K562 (cell line): ENCODE measurements at regions of chr6 and their contacts with region 1.

Region 1: DNA sequence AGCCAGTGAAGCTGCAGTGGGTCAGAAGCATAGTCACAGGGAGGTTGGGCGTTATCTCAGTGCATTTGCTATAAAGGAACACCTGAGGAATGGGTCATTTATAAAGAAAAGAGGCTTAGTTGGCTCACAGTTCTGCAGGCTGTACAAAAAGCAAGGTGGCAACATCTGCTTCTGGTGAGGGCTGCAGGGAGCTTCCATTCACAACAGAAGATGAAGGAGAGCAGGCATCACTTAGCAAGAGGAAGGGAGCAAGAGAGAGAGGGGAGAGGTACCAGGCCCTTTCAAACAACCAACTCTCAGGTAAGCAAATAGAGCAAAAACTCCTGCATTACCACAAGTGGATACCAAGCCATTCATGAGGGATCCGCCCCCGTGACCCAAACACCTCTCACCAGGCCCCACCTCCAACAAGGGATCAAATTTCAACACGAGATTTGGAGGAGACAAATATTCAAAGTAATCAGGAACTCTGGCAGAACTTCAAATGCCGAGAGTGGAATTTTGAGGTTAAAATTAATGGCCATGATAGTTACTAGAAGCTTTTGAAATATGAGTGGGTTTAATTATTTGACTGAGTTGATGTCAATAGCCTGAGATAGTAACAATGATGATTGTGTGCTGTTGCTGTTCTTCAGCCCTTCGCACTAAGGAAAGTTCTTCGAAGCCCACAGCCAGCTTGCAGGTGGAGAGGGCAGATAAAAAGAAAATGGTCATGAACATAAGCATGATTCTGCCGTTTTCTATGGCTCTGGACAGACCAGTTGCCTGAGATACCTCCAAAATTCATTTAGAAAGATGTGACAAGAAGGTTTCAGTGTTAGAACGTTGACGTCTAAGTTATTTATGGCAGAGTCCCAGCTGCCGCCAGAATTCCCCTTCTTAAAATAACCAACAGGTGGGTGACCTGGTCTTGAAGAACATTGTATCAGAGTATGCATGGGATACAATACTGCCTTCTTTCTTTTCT is 55.3 kb upstream of the ADTRP start:
- DNase-seq: peak; percentile 28 to 90 (median 58)
- ATAC-seq: peak; percentile 91
- H3K4me3 ChIP-seq: peak overlapping the region; percentile 6; the same call in 1 of the 2 replicates
- H3K27ac ChIP-seq: peak overlapping the region; percentile 74
- H3K4me1 ChIP-seq: peaks cover 14 to 33% of the 10 kb centered on the region in 2 experiments; a peak in 4 of 5 replicates
- H3K27me3 ChIP-seq: no peaks in the 10 kb centered on the region
- CTCF ChIP-seq: no peak
- EP300 ChIP-seq: peak; percentile 92
- POLR2A ChIP-seq: no peak
- RAD21 ChIP-seq: peak in 1 of 2 experiments; percentile 22; a peak in 1 of 4 replicates

Region 2: DNA sequence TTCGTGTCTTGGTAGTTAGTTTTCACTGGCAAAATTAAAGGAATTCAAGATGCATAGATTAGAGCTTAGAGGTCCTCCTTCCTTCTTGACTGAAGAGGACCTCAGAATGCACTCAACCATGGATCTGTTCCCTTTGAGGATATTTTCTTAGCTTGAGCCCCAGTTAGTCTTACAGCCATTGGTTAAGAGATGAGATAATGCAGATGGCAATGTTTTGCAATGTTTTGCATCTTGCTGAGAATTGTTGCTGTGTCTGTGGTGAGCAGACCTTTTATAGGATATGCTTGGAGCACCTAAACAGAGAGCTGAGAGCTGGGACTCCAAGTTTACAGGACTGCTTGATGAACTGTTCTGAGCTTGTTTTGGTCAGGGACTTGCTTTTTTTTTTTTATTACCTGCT is 188.9 kb before region 1 on chr6:
- CTCF ChIA-PET with region 1: no interaction called
- POLR2A ChIA-PET with region 1: no interaction called
- in situ Hi-C with region 1: no loop called
- intact Hi-C with region 1: no loop called
- DNase-seq: no peak
- ATAC-seq: no peak
- H3K4me3 ChIP-seq: no peak overlapping the region
- H3K27ac ChIP-seq: no peak overlapping the region
- H3K4me1 ChIP-seq: no peaks in the 10 kb centered on the region
- H3K27me3 ChIP-seq: peaks cover 28 to 41% of the 10 kb centered on the region in 2 experiments
- CTCF ChIP-seq: no peak
- EP300 ChIP-seq: no peak
- POLR2A ChIP-seq: no peak
- RAD21 ChIP-seq: no peak

Region 3: DNA sequence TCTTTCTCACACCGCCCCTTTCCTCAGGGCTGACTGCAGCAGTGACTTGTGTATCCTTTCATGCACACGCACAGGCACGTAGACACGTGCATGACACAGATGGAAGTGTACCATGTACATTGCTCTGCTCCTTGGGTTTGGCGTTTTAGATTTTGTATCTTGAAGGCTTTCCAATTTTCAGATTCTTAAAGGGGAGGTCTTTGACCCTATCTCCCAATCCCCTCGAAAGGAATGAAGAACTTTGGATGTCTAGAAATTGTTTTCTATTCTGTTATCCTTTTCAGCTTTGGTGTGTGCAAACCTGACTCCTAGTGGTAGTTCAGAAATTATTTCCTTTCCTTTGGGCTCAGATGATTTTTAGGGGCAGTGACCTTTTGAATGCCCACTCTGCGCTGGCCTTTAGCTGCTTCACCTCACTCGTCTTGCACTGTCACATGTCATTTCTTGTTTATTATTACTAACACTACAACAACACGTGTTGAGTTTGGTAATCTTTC is 241.2 kb after region 1 on chr6:
- CTCF ChIA-PET with region 1: no interaction called
- POLR2A ChIA-PET with region 1: no interaction called
- in situ Hi-C with region 1: no loop called
- intact Hi-C with region 1: loop called (anchors 1 kb)
- DNase-seq: peak in 2 of 4 experiments; percentile 40 to 47
- ATAC-seq: peak; percentile 74
- H3K4me3 ChIP-seq: no peak overlapping the region
- H3K27ac ChIP-seq: no peak overlapping the region
- H3K4me1 ChIP-seq: peaks cover 0 to 14% of the 10 kb centered on the region in 2 experiments; a peak in 3 of 5 replicates
- H3K27me3 ChIP-seq: no peaks in the 10 kb centered on the region
- CTCF ChIP-seq: peak; percentile 51 to 72 (median 57); a peak in 5 of 6 replicates
- EP300 ChIP-seq: no peak
- POLR2A ChIP-seq: no peak
- RAD21 ChIP-seq: peak; percentile 73 to 80